ENCODE measurements at regions of chr7 and their contacts with region 1.

Region 1: DNA sequence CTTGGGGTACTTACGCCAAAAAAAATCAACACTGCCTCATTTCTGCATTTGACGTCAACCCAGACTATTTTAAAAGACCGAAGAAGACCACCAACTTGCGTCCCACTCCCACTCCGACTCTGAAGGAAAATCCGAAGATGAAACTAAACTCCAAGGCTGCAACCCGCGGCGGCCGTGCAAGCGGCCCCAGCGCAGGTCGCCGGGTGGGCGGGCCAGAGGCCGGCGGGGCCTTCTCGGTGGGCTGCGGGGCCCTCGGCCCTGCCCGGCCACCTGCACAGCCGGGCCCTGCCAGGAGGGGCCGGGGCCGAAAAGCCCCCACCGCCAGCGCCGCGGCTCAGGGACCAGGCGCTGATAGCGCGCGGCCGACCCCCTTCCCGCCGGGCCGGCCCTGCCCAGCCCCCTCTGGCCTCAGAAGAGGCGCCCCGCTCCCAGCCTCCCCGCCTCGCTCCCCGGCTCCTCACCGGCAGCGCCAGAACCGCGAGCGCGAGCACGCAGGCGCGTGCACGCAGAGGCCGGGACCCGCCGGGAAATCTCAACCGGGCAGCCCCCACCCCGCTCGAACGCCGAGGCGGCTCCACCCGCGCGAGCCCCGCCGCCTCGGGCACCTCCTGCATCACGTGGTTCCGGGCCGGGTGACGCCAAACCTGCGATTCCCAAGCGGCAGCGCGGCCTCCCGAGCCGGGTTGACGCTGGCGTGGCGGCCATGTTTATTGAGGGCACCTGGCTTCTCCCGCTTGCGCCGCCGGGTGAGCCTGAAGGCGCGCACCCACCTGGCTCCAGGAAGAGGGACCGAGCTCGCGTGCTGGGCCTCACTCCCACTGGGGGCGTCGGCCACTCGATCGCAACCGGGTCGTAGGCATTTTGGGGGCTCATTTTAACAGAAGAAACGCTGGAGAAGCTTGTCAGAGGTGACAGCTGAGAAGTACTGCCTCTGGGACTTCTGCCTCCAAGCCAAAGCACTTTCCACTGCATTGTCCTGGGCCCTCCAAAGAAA is at the start of gene C7orf25:
- DNase-seq: peak; percentile 95
- H3K4me3 ChIP-seq: peak within 1 kb of the TSS; percentile 68 to 94 (median 92)
- H3K27ac ChIP-seq: peak within 1 kb of the TSS; percentile 33
- H3K4me1 ChIP-seq: peaks cover 33% of the 10 kb centered on the region
- H3K27me3 ChIP-seq: no peaks in the 10 kb centered on the region
- CTCF ChIP-seq: no peak
- POLR2A ChIP-seq: peak; percentile 60
- total RNA-seq, gene C7orf25: 4.2 and 4.5 TPM in 2 replicates

Region 2: GRCh38 chr7:42886129-42886528 is 25.6 kb before region 1 on chr7:
- CTCF ChIA-PET with region 1: interaction called, 3 read pairs
- POLR2A ChIA-PET with region 1: no interaction called
- dilution Hi-C with region 1: no loop called
- intact Hi-C with region 1: loop called (anchors 1 kb)
- DNase-seq: no peak
- H3K4me3 ChIP-seq: no peak overlapping the region
- H3K27ac ChIP-seq: no peak overlapping the region
- H3K4me1 ChIP-seq: peaks cover 9% of the 10 kb centered on the region
- H3K27me3 ChIP-seq: peaks cover 1 to 8% of the 10 kb centered on the region in 2 experiments
- CTCF ChIP-seq: no peak
- POLR2A ChIP-seq: no peak

Measured in endothelial cell of umbilical vein (primary cell).